ENCODE measurements at regions of chr10 and their contacts with region 1.

Region 1: GRCh38 chr10:93482145-93482834 is at the start of gene MYOF:
- DNase-seq: peak; percentile 67
- H3K4me3 Mint-ChIP-seq: peak within 1 kb of the TSS; percentile 86
- H3K27ac Mint-ChIP-seq: peak within 1 kb of the TSS; percentile 90
- H3K4me1 Mint-ChIP-seq: peaks cover 29% of the 10 kb centered on the region
- H3K27me3 Mint-ChIP-seq: no peaks in the 10 kb centered on the region
- total RNA-seq, gene MYOF: 10.8 to 10.9 TPM

Region 2: GRCh38 chr10:93357680-93358079 is 124.6 kb before region 1 on chr10:
- CTCF ChIA-PET with region 1: interaction called, 38 read pairs
- POLR2A ChIA-PET with region 1: interaction called, 3 read pairs
- DNase-seq: peak; percentile 30
- H3K4me3 Mint-ChIP-seq: no peak overlapping the region
- H3K27ac Mint-ChIP-seq: no peak overlapping the region
- H3K4me1 Mint-ChIP-seq: peaks cover 5% of the 10 kb centered on the region
- H3K27me3 Mint-ChIP-seq: no peaks in the 10 kb centered on the region

Region 3: DNA sequence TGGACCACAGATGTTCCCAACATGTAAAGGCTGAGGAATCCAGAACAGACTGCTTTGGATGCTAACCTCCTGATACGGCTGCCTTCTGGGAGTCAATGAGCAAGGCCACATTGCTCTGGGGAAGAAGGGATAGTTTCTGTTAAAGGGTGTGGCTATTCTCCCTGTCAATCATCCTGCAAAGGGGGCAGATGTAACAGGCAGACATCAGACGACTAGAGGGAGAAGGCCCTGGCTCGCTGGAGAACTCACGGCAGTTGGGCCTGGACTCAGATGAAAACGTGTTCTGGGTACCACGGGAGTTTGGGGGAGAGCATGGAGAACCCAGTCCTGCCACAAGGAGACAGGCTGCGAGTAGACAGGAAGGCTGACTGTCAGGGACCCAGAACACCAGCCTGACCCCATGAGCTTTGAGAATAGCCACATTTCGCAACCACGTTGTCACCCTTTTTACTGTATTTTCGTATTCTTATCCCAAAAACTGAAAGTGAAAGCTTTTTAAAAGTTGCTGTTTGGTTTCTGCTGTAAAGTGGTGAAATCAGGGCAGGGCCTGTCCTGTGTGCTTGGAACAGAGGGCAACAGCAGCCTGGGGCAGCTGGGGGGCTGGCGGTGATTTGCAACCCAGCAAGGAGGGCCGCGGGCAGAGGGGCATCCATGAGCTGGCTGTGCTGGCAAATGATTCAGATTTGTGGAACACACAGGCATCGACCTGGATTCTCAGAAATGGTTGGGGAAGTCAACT is 95.5 kb before region 1 on chr10:
- CTCF ChIA-PET with region 1: interaction called, 511 read pairs
- POLR2A ChIA-PET with region 1: interaction called, 5 read pairs
- DNase-seq: peak; percentile 29
- H3K4me3 Mint-ChIP-seq: peak overlapping the region; percentile 47
- H3K27ac Mint-ChIP-seq: peak overlapping the region; percentile 83
- H3K4me1 Mint-ChIP-seq: peaks cover 30% of the 10 kb centered on the region
- H3K27me3 Mint-ChIP-seq: no peaks in the 10 kb centered on the region

Region 4: DNA sequence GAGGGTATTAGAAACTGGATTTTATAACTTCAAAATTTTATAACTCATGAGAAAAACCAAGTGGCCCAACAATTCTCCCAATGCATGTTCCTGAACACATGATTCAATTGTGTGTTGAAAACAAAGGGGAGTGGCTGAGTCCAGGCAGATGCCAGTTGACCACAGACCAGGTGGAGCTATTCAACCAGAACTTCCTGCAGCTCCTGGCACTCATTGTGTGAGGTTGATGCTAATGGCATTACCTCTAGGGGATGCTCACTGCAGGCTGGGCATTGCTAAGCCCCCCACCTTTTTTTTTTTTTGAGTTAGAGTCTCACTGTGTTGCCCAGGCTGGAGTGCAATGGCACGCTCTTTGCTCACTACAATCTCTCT is 20.5 kb before region 1 on chr10:
- CTCF ChIA-PET with region 1: interaction called, 13 read pairs
- POLR2A ChIA-PET with region 1: interaction called, 19 read pairs
- DNase-seq: peak; percentile 37
- H3K4me3 Mint-ChIP-seq: no peak overlapping the region
- H3K27ac Mint-ChIP-seq: peak overlapping the region; percentile 85
- H3K4me1 Mint-ChIP-seq: peaks cover 48% of the 10 kb centered on the region
- H3K27me3 Mint-ChIP-seq: no peaks in the 10 kb centered on the region

Region 5: GRCh38 chr10:93503075-93503474 is 20.8 kb after region 1 on chr10:
- CTCF ChIA-PET with region 1: interaction called, 116 read pairs
- POLR2A ChIA-PET with region 1: interaction called, 10 read pairs
- DNase-seq: no peak
- H3K4me3 Mint-ChIP-seq: peak overlapping the region; percentile 67
- H3K27ac Mint-ChIP-seq: peak overlapping the region; percentile 87
- H3K4me1 Mint-ChIP-seq: peaks cover 72% of the 10 kb centered on the region
- H3K27me3 Mint-ChIP-seq: no peaks in the 10 kb centered on the region